IMR-90 (cell line): ENCODE measurements at regions of chr6 and their contacts with region 1.

Region 1: GRCh38 chr6:32190054-32190851 is at the start of gene PBX2:
- DNase-seq: peak; percentile 89
- ATAC-seq: peak; percentile 79
- H3K4me3 ChIP-seq: peak within 1 kb of the TSS; percentile 75
- H3K27ac ChIP-seq: peak within 1 kb of the TSS; percentile 99
- H3K4me1 ChIP-seq: peaks cover 12% of the 10 kb centered on the region
- H3K27me3 ChIP-seq: no peaks in the 10 kb centered on the region
- CTCF ChIP-seq: no peak
- POLR2A ChIP-seq: 0 out of 2 replicates have a peak, but pooled peaks have one; percentile 23
- RAD21 ChIP-seq: no peak
- total RNA-seq, gene PBX2: 13.9 and 17.7 TPM in 2 replicates

Region 2: GRCh38 chr6:32118782-32119628 is 71.2 kb before region 1 on chr6:
- CTCF ChIA-PET with region 1: interaction called, 6 read pairs
- POLR2A ChIA-PET with region 1: interaction called, 7 read pairs
- dilution Hi-C with region 1: no loop called
- in situ Hi-C with region 1: loop called (anchors 5 kb)
- intact Hi-C with region 1: loop called (anchors 1 kb)
- DNase-seq: peak; percentile 85
- ATAC-seq: peak; percentile 78
- H3K4me3 ChIP-seq: no peak overlapping the region
- H3K27ac ChIP-seq: peak overlapping the region; percentile 36; the same call in 1 of the 2 replicates
- H3K4me1 ChIP-seq: peaks cover 11% of the 10 kb centered on the region
- H3K27me3 ChIP-seq: no peaks in the 10 kb centered on the region
- CTCF ChIP-seq: peak; percentile 98
- POLR2A ChIP-seq: peak; percentile 57; the same call in 1 of the 2 replicates
- RAD21 ChIP-seq: peak; percentile 98